ENCODE measurements at regions of chr3 and their contacts with region 1.

Region 1: GRCh38 chr3:49454458-49454857 is 15.6 kb upstream of the DAG1 start:
- DNase-seq: peak; percentile 44
- H3K4me3 ChIP-seq: no peak overlapping the region
- H3K27ac ChIP-seq: no peak overlapping the region
- H3K4me1 ChIP-seq: peaks cover 21% of the 10 kb centered on the region
- H3K27me3 ChIP-seq: no peaks in the 10 kb centered on the region
- CTCF ChIP-seq: peak in 1 of 3 experiments; percentile 9
- POLR2A ChIP-seq: no peak

Region 2: DNA sequence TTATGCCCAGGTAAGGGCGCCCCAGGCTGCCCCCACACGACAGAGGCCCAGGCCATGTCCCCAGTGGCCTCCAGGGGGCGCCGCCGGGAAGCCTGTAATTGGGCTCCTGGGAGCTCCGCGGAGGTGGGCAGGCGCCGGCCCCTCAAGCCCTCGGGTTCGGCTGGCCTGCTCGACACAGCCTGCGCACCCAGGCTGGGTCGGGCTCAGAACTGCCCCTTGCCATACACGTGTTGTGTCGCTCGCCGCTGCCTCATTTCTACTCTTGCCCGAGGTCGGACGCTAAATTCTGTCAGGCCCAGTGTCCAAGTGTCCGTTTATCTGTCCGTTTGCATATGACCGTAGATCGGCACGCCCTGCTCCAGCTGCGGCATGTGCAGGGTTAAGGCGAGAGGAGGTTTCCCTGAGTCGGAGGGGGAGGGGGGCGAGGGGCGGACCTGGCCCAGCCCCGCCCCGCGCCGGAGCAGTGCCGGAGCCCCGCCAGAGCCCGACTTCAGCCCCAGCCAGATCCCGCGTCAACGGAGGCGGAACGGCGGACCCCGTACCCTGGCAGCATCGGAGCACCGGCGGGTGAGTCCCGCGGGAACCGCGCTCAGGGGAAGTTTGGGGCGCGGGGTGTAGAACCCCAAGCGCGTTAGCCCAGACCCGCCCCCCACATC is 283.2 kb before region 1 on chr3 and contains the start of gene KLHDC8B:
- intact Hi-C with region 1: loop called (anchors 10 kb)
- DNase-seq: peak; percentile 91
- H3K4me3 ChIP-seq: peak within 1 kb of the TSS; percentile 80 to 87
- H3K27ac ChIP-seq: peak within 1 kb of the TSS; percentile 78 to 90
- H3K4me1 ChIP-seq: peaks cover 40% of the 10 kb centered on the region
- H3K27me3 ChIP-seq: no peaks in the 10 kb centered on the region
- CTCF ChIP-seq: peak; percentile 91 to 96 (median 95)
- POLR2A ChIP-seq: no peak
- total RNA-seq, gene KLHDC8B: 56.6 to 78.2 TPM

Measured in testis (tissue), 5 donors.